ENCODE measurements at regions of chr11 and their contacts with region 1.

Region 1: GRCh38 chr11:18321980-18322711 is at the starts of genes GTF2H1 and HPS5:
- DNase-seq: peak; percentile 98
- ATAC-seq: peak; percentile 91
- H3K4me3 Mint-ChIP-seq: peak within 1 kb of the TSS; percentile 98
- H3K27ac Mint-ChIP-seq: peak within 1 kb of the TSS; percentile 100
- H3K4me1 Mint-ChIP-seq: peaks cover 65% of the 10 kb centered on the region
- H3K27me3 Mint-ChIP-seq: no peaks in the 10 kb centered on the region
- total RNA-seq, gene GTF2H1: 47.2 to 47.8 TPM
- total RNA-seq, gene HPS5: 15.8 to 18.0 TPM

Region 2: DNA sequence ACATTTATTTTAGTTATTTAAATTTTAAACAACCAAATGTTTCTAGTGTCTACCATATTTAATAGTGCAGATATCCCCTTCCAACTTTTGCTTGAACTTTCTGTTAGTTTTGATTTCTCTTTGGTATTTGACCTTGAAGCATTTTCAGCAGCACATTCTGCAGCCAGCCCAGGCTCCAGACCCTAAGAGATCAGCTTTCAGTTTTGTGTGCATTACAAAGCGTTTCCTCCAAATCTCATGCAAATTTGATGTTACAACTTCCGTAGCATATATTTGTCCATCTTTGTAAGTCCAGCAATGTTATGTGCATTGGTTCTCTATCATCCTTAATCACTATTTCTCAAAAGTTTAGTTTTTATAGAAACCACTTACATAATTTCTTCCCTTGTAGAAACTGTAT is 294.7 kb before region 1 on chr11:
- CTCF ChIA-PET with region 1: no interaction called
- POLR2A ChIA-PET with region 1: no interaction called
- DNase-seq: no peak
- ATAC-seq: no peak
- H3K4me3 Mint-ChIP-seq: no peak overlapping the region
- H3K27ac Mint-ChIP-seq: no peak overlapping the region
- H3K4me1 Mint-ChIP-seq: peaks cover 4% of the 10 kb centered on the region
- H3K27me3 Mint-ChIP-seq: peaks cover 10% of the 10 kb centered on the region

Region 3: GRCh38 chr11:18091731-18092130 is 230.4 kb before region 1 on chr11:
- CTCF ChIA-PET with region 1: no interaction called
- POLR2A ChIA-PET with region 1: no interaction called
- DNase-seq: no peak
- ATAC-seq: no peak
- H3K4me3 Mint-ChIP-seq: no peak overlapping the region
- H3K27ac Mint-ChIP-seq: no peak overlapping the region
- H3K4me1 Mint-ChIP-seq: no peaks in the 10 kb centered on the region
- H3K27me3 Mint-ChIP-seq: no peaks in the 10 kb centered on the region

Region 4: GRCh38 chr11:18332302-18332701 is 10.2 kb after region 1 on chr11:
- CTCF ChIA-PET with region 1: interaction called, 3 read pairs
- POLR2A ChIA-PET with region 1: interaction called, 10 read pairs
- DNase-seq: no peak
- ATAC-seq: peak; percentile 46
- H3K4me3 Mint-ChIP-seq: no peak overlapping the region
- H3K27ac Mint-ChIP-seq: peak overlapping the region; percentile 84
- H3K4me1 Mint-ChIP-seq: peaks cover 37% of the 10 kb centered on the region
- H3K27me3 Mint-ChIP-seq: no peaks in the 10 kb centered on the region

Region 5: DNA sequence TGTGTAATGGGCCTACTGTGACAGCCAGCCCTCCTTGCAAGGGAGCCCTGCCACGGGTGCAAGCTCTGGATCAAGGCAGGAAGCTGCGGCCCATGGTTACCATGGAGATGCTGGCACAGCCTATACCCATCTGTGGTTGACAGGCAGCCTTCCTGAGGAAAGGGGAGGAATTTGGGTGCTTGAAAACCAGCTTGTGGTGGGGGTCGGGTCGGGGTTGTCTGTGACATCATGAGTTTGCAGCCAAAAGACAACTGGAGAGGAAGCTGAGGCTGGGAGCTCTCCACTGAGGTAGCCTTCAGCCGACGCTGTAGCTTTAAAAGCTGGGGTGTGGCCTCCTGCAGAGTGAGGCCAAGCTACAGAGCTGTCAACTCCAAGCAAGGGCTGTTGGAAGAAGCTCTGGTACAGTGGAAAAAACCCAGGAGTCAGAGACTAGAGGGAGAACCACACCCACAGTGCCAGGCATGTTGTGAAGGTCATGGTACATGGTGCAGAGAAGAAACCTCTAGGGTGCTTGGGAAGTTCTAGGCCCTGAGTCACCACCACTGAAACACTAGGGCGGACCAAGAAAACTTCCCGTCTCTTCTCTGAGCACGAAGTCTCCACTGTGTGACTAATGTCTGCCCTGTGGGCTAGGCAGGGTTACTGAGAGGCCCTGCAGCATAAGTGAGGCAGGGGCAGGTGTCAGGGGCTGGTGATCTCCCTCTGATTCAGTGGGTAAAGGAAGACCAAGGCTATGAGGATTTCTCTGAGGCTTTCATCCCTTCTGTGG is 61.4 kb after region 1 on chr11:
- CTCF ChIA-PET with region 1: no interaction called
- POLR2A ChIA-PET with region 1: interaction called, 27 read pairs
- DNase-seq: peak; percentile 82
- ATAC-seq: peak; percentile 78
- H3K4me3 Mint-ChIP-seq: peak overlapping the region; percentile 69
- H3K27ac Mint-ChIP-seq: peak overlapping the region; percentile 99
- H3K4me1 Mint-ChIP-seq: peaks cover 51% of the 10 kb centered on the region
- H3K27me3 Mint-ChIP-seq: no peaks in the 10 kb centered on the region

Region 6: DNA sequence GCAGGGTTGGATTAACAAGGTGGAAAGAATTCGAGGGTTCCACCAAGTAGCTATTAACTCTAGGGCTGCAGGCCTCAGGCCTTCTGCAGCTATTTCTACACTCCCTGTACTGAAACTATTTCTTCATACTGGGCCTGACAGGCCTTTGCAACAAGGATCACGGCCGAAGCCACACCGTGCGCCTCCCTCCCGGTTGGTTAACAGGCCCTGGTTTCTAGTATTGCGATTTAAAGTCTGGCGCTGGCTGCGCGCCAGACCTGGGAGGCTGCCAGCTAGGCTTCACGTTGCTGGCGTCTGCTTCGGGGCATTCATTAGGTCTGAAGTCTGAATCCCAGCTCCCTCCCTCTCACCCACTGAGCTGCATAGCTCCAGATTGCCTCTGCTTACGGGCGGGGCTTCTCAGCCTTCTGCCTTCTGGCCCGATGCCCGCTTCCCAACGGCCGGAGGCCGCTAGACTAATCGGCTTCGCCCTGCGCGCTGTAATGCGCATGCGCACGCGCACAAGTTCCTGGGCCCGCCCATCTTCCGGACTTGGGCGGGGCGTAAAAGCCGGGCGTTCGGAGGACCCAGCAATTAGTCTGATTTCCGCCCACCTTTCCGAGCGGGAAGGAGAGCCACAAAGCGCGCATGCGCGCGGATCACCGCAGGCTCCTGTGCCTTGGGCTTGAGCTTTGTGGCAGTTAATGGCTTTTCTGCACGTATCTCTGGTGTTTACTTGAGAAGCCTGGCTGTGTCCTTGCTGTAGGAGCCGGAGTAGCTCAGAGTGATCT is 73.8 kb after region 1 on chr11:
- CTCF ChIA-PET with region 1: interaction called, 11 read pairs
- POLR2A ChIA-PET with region 1: interaction called, 74 read pairs
- DNase-seq: peak; percentile 97
- ATAC-seq: peak; percentile 66
- H3K4me3 Mint-ChIP-seq: peak overlapping the region; percentile 99
- H3K27ac Mint-ChIP-seq: peak overlapping the region; percentile 98
- H3K4me1 Mint-ChIP-seq: peaks cover 56% of the 10 kb centered on the region
- H3K27me3 Mint-ChIP-seq: no peaks in the 10 kb centered on the region

Region 7: GRCh38 chr11:18457431-18457830 is 135.3 kb after region 1 on chr11:
- CTCF ChIA-PET with region 1: no interaction called
- POLR2A ChIA-PET with region 1: no interaction called
- DNase-seq: no peak
- ATAC-seq: no peak
- H3K4me3 Mint-ChIP-seq: no peak overlapping the region
- H3K27ac Mint-ChIP-seq: no peak overlapping the region
- H3K4me1 Mint-ChIP-seq: no peaks in the 10 kb centered on the region
- H3K27me3 Mint-ChIP-seq: no peaks in the 10 kb centered on the region

Region 8: GRCh38 chr11:18526521-18527296 is 204.6 kb after region 1 on chr11 and contains the start of gene TSG101:
- CTCF ChIA-PET with region 1: no interaction called
- POLR2A ChIA-PET with region 1: interaction called, 14 read pairs
- DNase-seq: peak; percentile 93
- ATAC-seq: peak; percentile 81
- H3K4me3 Mint-ChIP-seq: peak within 1 kb of the TSS; percentile 99
- H3K27ac Mint-ChIP-seq: peak within 1 kb of the TSS; percentile 99
- H3K4me1 Mint-ChIP-seq: peaks cover 33% of the 10 kb centered on the region
- H3K27me3 Mint-ChIP-seq: no peaks in the 10 kb centered on the region
- total RNA-seq, gene TSG101: 33.5 to 48.7 TPM

Measured in activated CD8-positive, alpha-beta T cell treated with anti-CD3 and anti-CD28 coated beads, Interleukin-2, amount 10 ng/mL, durations not matched to agents 7 days and 5 days (primary cell).